Heart right ventricle (tissue), 16 donors: ENCODE measurements at regions of chr21 and their contacts with region 1.

Region 1: DNA sequence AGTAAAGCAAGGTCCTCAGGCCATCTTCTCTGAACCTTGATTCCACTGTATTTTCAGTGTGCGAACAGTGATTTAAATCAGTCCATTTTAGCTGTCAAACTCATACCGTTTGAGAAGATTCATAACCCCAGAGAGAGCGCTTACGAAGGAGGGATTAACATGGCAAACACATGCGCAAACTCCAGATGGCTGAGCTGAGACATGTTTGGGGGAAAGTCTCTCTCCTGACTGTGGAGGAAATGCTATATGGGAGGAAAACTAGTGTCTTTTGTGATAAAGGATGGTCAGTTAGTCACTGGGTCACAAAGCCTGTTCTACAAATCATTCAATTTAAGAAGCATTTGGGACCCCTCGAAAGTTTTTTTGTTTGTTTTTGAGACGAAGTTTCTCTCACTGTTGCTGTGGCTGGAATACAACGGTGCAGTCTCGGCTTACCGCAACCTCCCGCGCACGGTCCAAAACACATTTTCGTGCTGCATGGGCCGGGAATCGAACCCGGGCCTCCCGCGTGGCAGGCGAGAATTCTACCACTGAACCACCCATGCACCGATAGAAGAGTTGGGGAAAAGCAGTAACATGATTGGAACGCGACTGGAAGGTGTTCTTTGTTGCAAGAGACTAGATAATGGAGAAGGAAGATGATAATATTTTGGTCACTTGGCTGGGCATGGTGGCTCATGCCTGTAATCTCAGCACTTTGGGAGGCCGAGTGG is 58.4 kb upstream of the CXADR start:
- DNase-seq: no peak
- ATAC-seq: peak in 4 of 8 donors; percentile 24 to 91 (median 56)
- H3K4me3 ChIP-seq: no peak overlapping the region
- H3K27ac ChIP-seq: peak overlapping the region in 1 of 10 donors; percentile 7
- H3K4me1 ChIP-seq: peaks cover 0 to 12% (median 0%) of the 10 kb centered on the region in 9 donors
- H3K27me3 ChIP-seq: no peaks in the 10 kb centered on the region
- CTCF ChIP-seq: no peak

Region 2: GRCh38 chr21:17393413-17393812 is 61.1 kb before region 1 on chr21:
- intact Hi-C with region 1: loop called in 2 of 10 experiments (anchors 5 to 10 kb)
- DNase-seq: no peak
- ATAC-seq: no peak
- H3K4me3 ChIP-seq: no peak overlapping the region
- H3K27ac ChIP-seq: no peak overlapping the region
- H3K4me1 ChIP-seq: no peaks in the 10 kb centered on the region
- H3K27me3 ChIP-seq: no peaks in the 10 kb centered on the region
- CTCF ChIP-seq: no peak

Region 3: GRCh38 chr21:17495680-17496079 is 41.2 kb after region 1 on chr21:
- intact Hi-C with region 1: no loop called
- DNase-seq: no peak
- ATAC-seq: no peak
- H3K4me3 ChIP-seq: no peak overlapping the region
- H3K27ac ChIP-seq: no peak overlapping the region
- H3K4me1 ChIP-seq: peaks cover 0 to 17% (median 0%) of the 10 kb centered on the region in 9 donors
- H3K27me3 ChIP-seq: no peaks in the 10 kb centered on the region
- CTCF ChIP-seq: no peak

Region 4: DNA sequence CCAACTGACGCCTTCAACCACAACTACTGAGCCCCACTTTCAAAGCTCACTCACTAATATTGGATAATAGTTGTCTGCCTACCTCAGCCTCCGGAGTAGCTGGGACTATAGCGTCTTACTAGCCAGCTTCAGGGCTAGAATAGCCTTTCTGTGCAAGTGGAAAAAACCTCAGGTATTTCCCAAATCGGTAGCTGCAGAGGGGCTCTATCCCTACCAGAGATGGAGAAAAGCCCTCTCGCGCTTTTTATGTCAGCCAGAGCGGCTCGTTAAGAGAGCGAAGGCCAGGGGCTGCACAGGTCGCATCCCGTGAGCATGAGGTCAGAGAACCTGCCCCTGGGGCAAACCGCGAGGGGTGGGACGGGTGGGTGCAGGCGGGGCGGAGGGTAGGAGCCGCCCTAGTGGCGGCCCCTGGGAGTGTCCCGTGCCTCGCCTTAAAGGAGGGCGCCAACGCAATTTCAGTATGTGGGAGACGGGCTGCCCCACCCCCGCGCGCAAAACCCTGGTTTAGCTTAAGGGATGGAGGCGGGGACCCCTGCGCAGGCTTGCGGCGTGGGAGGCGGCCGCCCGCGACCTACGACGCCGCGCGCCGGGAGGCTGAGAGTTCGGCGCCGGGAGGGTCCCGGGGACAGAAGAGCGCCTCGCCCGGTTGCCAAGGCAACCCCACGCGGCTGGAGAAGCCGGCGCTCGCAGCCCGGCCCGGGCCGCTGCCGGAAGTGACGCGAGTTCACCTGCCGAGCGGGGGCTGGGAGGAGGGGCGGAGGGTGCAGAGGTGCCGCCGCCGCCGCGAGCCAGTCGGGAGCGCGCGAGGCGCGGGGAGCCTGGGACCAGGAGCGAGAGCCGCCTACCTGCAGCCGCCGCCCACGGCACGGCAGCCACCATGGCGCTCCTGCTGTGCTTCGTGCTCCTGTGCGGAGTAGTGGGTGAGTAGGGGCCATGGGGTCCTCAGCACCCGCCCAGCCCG is 58.1 kb after region 1 on chr21 and contains the start of gene CXADR:
- intact Hi-C with region 1: no loop called
- DNase-seq: peak; percentile 63 to 76
- ATAC-seq: peak; percentile 86 to 98 (median 90)
- H3K4me3 ChIP-seq: peak within 1 kb of the TSS; percentile 46 to 80 (median 66)
- H3K27ac ChIP-seq: peak within 1 kb of the TSS; percentile 50 to 94 (median 86)
- H3K4me1 ChIP-seq: peaks cover 0 to 24% (median 11%) of the 10 kb centered on the region in 9 donors
- H3K27me3 ChIP-seq: peaks cover 0 to 58% (median 12%) of the 10 kb centered on the region in 7 donors
- CTCF ChIP-seq: peak; percentile 35 to 60 (median 53)
- total RNA-seq, gene CXADR: 16.7 to 42.1 (median 28.5) TPM